ENCODE measurements at regions of chr4 and their contacts with region 1.

Region 1: DNA sequence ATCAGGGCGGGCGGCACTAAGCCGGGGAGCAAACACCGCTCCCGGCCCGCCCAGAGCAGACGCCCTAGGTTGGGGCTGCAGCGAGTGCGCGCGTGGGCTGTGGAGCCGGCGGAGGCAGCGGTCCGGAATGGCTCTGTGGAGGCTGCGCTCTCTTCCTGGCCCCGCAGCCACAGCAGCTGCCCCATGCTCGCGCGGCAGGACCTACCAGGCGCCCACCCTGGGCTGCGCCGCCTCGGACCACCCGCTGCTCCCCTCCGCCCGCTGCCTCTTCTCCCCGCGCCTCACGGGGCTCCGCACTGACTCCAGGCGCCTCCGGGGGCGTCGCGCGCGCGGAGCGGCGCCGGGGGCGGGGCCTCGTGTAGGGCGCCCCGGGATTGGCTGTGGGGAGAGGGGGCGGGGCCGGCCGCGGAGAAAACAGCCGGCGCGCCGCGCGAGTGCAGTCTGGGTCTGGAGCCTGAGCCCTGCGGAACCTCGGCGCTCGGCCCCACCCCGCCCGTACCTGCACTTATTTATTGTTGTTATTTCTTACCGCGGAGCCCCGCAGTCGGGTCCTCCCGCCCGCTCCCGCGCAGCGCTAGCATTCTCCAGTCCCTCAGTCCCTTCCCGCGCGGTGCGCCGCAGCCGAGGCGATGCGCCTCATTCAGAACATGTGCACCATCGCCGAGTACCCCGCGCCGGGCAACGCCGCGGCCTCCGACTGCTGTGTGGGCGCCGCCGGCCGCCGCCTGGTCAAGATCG is at the start of gene RASL11B:
- DNase-seq: peak; percentile 73 to 91 (median 84)
- ATAC-seq: peak; percentile 99
- H3K4me3 ChIP-seq: peak within 1 kb of the TSS; percentile 58
- H3K4me3 Mint-ChIP-seq: peak within 1 kb of the TSS; percentile 74 to 88 (median 84)
- H3K27ac ChIP-seq: peak within 1 kb of the TSS; percentile 34
- H3K27ac Mint-ChIP-seq: peak within 1 kb of the TSS in 5 of 9 donors; percentile 16 to 87 (median 49)
- H3K4me1 ChIP-seq: peaks cover 0 to 6% of the 10 kb centered on the region in 2 donors
- H3K4me1 Mint-ChIP-seq: peaks cover 0 to 17% (median 8%) of the 10 kb centered on the region in 7 donors
- H3K27me3 ChIP-seq: no peaks in the 10 kb centered on the region
- H3K27me3 Mint-ChIP-seq: peaks cover 28 to 41% (median 38%) of the 10 kb centered on the region in 5 donors
- total RNA-seq, gene RASL11B: 0.41 TPM in 1 of 5 experiments, not detected in the others

Region 2: GRCh38 chr4:52712172-52712990 is 149.7 kb before region 1 on chr4:
- CTCF ChIA-PET with region 1: no interaction called
- POLR2A ChIA-PET with region 1: interaction called, 8 read pairs
- intact Hi-C with region 1: loop called (anchors 1 kb)
- DNase-seq: peak; percentile 81 to 97 (median 95)
- ATAC-seq: peak; percentile 96
- H3K4me3 ChIP-seq: peak overlapping the region; percentile 73
- H3K4me3 Mint-ChIP-seq: peak overlapping the region; percentile 82 to 96 (median 92)
- H3K27ac ChIP-seq: peak overlapping the region; percentile 81
- H3K27ac Mint-ChIP-seq: peak overlapping the region; percentile 87 to 98 (median 96)
- H3K4me1 ChIP-seq: peaks cover 23 to 24% of the 10 kb centered on the region in 2 donors
- H3K4me1 Mint-ChIP-seq: peaks cover 23 to 46% (median 38%) of the 10 kb centered on the region in 7 donors
- H3K27me3 ChIP-seq: no peaks in the 10 kb centered on the region
- H3K27me3 Mint-ChIP-seq: peaks cover 0 to under 1% (median 0%) of the 10 kb centered on the region in 5 donors

Region 3: DNA sequence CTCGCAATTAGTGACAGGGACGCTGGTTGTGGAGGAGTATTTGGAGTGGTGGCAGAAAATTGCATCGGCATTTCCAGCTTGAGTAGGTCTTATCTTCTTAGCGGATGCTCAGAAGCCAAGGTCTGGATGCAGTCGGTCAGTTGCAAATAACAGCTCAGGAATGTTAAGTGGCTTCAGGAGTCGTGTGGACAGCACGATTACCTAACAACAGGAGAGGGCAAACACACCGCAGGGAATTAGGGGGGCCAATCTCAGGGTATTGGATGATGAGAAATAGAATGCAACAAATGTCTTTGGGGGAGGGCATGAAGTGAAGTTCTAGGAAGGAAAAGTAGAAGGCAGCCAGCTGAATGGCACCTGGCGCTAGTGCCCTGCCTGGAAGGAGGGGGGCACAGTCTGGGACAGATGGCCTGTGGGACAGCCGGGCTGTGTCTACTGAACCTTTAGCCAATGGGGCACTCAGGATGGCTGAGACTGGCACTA is 11.9 kb after region 1 on chr4:
- CTCF ChIA-PET with region 1: no interaction called
- POLR2A ChIA-PET with region 1: no interaction called
- intact Hi-C with region 1: no loop called
- DNase-seq: no peak
- ATAC-seq: no peak
- H3K4me3 ChIP-seq: no peak overlapping the region
- H3K4me3 Mint-ChIP-seq: no peak overlapping the region
- H3K27ac ChIP-seq: no peak overlapping the region
- H3K27ac Mint-ChIP-seq: no peak overlapping the region
- H3K4me1 ChIP-seq: no peaks in the 10 kb centered on the region
- H3K4me1 Mint-ChIP-seq: peaks cover 4 to 28% (median 15%) of the 10 kb centered on the region in 7 donors
- H3K27me3 ChIP-seq: no peaks in the 10 kb centered on the region
- H3K27me3 Mint-ChIP-seq: no peaks in the 10 kb centered on the region

Region 4: GRCh38 chr4:52911684-52912294 is 49.7 kb after region 1 on chr4:
- CTCF ChIA-PET with region 1: no interaction called
- POLR2A ChIA-PET with region 1: no interaction called
- intact Hi-C with region 1: loop called in 1 of 2 experiments (anchors 1 kb)
- DNase-seq: peak; percentile 15 to 64 (median 48)
- ATAC-seq: peak; percentile 56
- H3K4me3 ChIP-seq: no peak overlapping the region
- H3K4me3 Mint-ChIP-seq: no peak overlapping the region
- H3K27ac ChIP-seq: no peak overlapping the region
- H3K27ac Mint-ChIP-seq: no peak overlapping the region
- H3K4me1 ChIP-seq: peaks cover 0 to 5% of the 10 kb centered on the region in 2 donors
- H3K4me1 Mint-ChIP-seq: peaks cover 0 to 15% (median 6%) of the 10 kb centered on the region in 7 donors
- H3K27me3 ChIP-seq: no peaks in the 10 kb centered on the region
- H3K27me3 Mint-ChIP-seq: no peaks in the 10 kb centered on the region

Region 5: DNA sequence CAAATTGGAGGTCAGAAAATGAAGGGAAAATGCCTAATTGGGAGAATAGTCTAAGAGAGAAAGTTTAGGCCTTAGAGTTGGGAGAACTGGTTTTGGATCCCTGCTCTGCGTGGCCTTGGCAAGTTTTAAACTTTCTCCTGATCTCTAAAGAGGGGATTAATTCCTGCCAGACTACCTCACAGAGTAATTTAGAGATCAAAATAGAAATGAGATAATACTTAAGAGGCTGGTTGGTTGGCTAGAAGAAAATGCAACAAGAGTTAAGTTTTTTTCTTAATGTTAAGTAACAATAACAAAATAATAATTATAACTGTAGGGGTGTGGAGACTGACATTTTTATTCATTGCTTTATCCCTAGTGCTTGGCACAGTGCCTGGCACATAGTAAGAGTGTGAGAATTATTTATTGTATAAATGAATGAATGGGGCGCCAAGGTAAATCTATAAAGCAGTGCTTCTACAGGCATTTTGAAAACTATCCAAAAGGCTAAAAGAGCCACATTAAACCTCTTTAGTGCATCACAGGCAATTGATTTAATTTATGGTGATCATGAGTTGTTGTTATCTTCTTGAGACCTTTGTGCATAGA is 160.6 kb after region 1 on chr4:
- CTCF ChIA-PET with region 1: no interaction called
- POLR2A ChIA-PET with region 1: no interaction called
- intact Hi-C with region 1: no loop called
- DNase-seq: no peak
- ATAC-seq: no peak
- H3K4me3 ChIP-seq: no peak overlapping the region
- H3K4me3 Mint-ChIP-seq: no peak overlapping the region
- H3K27ac ChIP-seq: no peak overlapping the region
- H3K27ac Mint-ChIP-seq: no peak overlapping the region
- H3K4me1 ChIP-seq: no peaks in the 10 kb centered on the region
- H3K4me1 Mint-ChIP-seq: peaks cover 0 to 11% (median 0%) of the 10 kb centered on the region in 7 donors
- H3K27me3 ChIP-seq: no peaks in the 10 kb centered on the region
- H3K27me3 Mint-ChIP-seq: no peaks in the 10 kb centered on the region

Region 6: GRCh38 chr4:53365486-53366300 is 503.6 kb after region 1 on chr4 and contains the start of gene SCFD2:
- CTCF ChIA-PET with region 1: no interaction called
- POLR2A ChIA-PET with region 1: no interaction called
- intact Hi-C with region 1: loop called (anchors 5 to 10 kb)
- DNase-seq: peak; percentile 86 to 97 (median 94)
- ATAC-seq: peak; percentile 99
- H3K4me3 ChIP-seq: peak within 1 kb of the TSS; percentile 72
- H3K4me3 Mint-ChIP-seq: peak within 1 kb of the TSS; percentile 92 to 99 (median 96)
- H3K27ac ChIP-seq: peak within 1 kb of the TSS; percentile 85
- H3K27ac Mint-ChIP-seq: peak within 1 kb of the TSS; percentile 95 to 99 (median 96)
- H3K4me1 ChIP-seq: peaks cover 7 to 23% of the 10 kb centered on the region in 2 donors
- H3K4me1 Mint-ChIP-seq: peaks cover 32 to 64% (median 50%) of the 10 kb centered on the region in 7 donors
- H3K27me3 ChIP-seq: no peaks in the 10 kb centered on the region
- H3K27me3 Mint-ChIP-seq: peaks cover 0 to 20% (median 3%) of the 10 kb centered on the region in 5 donors
- total RNA-seq, gene SCFD2: 13.4 to 32.8 (median 28.0) TPM

Measured in naive thymus-derived CD4-positive, alpha-beta T cell (primary cell).